Activated T-helper 2 cell treated with anti-CD3 and anti-CD28 coated beads, Interferon-gamma antibody, Interleukin-2, Interleukin-4, amounts not matched to agents 10 μg/mL and 5 μg/mL and 100 μg/mL, durations not matched to agents 14 hours and 24 hours and 36 hours (primary cell): ENCODE measurements at regions of chr1 and their contacts with region 1.

Region 1: GRCh38 chr1:200979574-200980451 is 43.7 kb downstream of the KIF21B start:
- DNase-seq: peak; percentile 43
- H3K4me3 Mint-ChIP-seq: no peak overlapping the region
- H3K27ac Mint-ChIP-seq: no peak overlapping the region
- H3K4me1 Mint-ChIP-seq: no peaks in the 10 kb centered on the region
- H3K27me3 Mint-ChIP-seq: no peaks in the 10 kb centered on the region

Region 2: GRCh38 chr1:201042779-201043461 is 63.1 kb after region 1 on chr1:
- intact Hi-C with region 1: loop called (anchors 1 kb)
- DNase-seq: peak; percentile 53
- H3K4me3 Mint-ChIP-seq: no peak overlapping the region
- H3K27ac Mint-ChIP-seq: no peak overlapping the region
- H3K4me1 Mint-ChIP-seq: peaks cover 3% of the 10 kb centered on the region
- H3K27me3 Mint-ChIP-seq: peaks cover 11% of the 10 kb centered on the region